Activated CD4-positive, alpha-beta memory T cell treated with anti-CD3 and anti-CD28 coated beads, Interleukin-2, amount 10 ng/mL, durations not matched to agents 7 days and 5 days (primary cell): ENCODE measurements at regions of chr7 and their contacts with region 1.

Region 1: DNA sequence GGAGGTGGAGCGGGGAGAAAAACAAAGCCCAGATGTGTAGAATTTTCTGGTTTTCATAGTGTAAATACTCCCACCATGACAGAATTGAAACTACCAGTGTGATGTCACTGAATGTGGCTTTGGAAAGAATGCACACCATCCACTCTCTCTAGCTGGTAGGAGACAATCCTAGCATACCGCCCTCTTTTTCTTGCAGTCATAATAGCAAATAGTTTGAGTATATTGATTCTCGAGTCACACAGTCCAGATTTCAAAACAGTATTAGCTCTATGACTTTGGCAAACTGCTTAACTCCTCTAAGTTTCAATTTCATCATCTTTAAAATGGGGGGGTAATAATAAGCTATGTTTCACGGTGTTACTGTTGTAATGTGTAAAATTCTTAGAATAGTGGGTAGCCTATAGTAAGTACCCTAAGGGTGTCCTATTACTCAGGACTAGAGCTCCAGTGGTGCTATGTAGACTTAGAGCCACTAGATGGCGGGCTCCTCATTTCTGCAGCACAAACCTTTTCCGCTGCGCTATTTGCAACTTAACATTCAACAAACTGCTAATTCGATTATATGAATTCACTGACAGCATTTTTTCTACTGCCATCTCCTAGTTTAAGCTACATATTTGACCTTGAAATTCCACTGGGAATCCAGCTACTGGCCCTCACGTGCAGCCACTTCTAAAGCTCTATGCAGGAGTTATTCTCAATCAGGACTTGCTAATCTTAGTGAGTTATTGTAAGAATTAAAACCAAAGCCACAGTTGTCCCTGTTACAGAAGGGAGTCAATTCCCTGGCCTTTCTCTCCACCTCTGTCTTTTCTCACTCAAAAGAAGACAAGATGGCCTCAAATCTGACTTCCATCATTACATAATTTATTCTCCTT is 18.7 kb downstream of the TAS2R40 start:
- DNase-seq: peak; percentile 77
- H3K4me3 Mint-ChIP-seq: no peak overlapping the region
- H3K27ac Mint-ChIP-seq: peak overlapping the region; percentile 33
- H3K4me1 Mint-ChIP-seq: peaks cover 52% of the 10 kb centered on the region
- H3K27me3 Mint-ChIP-seq: peaks cover 16% of the 10 kb centered on the region

Region 2: DNA sequence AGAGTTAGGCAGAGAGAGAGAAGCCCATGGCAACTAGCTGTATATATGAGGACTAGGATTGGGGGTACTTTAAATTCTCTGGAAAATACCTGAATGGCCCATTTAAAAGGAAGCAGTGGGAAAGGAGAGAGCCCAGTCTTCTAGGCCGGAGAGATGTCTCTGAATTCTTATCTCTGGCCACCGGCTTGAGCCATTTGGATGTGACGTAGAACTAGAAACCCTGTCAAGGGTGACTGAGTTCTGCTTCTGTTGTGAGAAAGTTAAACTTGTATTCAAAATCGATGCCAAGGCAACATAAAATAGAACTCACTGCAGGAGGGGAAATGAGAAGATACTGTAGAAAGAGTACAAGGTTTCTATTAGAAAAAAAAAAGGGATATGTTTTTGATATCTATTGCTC is 16.4 kb after region 1 on chr7:
- CTCF ChIA-PET with region 1: interaction called, 178 read pairs
- POLR2A ChIA-PET with region 1: interaction called, 51 read pairs
- DNase-seq: no peak
- H3K4me3 Mint-ChIP-seq: no peak overlapping the region
- H3K27ac Mint-ChIP-seq: peak overlapping the region; percentile 58
- H3K4me1 Mint-ChIP-seq: peaks cover 74% of the 10 kb centered on the region
- H3K27me3 Mint-ChIP-seq: no peaks in the 10 kb centered on the region

Region 3: GRCh38 chr7:143279186-143280098 is 38.9 kb after region 1 on chr7:
- CTCF ChIA-PET with region 1: interaction called, 30 read pairs
- POLR2A ChIA-PET with region 1: interaction called, 7 read pairs
- DNase-seq: no peak
- H3K4me3 Mint-ChIP-seq: peak overlapping the region; percentile 65
- H3K27ac Mint-ChIP-seq: peak overlapping the region; percentile 70
- H3K4me1 Mint-ChIP-seq: peaks cover 41% of the 10 kb centered on the region
- H3K27me3 Mint-ChIP-seq: no peaks in the 10 kb centered on the region

Region 4: DNA sequence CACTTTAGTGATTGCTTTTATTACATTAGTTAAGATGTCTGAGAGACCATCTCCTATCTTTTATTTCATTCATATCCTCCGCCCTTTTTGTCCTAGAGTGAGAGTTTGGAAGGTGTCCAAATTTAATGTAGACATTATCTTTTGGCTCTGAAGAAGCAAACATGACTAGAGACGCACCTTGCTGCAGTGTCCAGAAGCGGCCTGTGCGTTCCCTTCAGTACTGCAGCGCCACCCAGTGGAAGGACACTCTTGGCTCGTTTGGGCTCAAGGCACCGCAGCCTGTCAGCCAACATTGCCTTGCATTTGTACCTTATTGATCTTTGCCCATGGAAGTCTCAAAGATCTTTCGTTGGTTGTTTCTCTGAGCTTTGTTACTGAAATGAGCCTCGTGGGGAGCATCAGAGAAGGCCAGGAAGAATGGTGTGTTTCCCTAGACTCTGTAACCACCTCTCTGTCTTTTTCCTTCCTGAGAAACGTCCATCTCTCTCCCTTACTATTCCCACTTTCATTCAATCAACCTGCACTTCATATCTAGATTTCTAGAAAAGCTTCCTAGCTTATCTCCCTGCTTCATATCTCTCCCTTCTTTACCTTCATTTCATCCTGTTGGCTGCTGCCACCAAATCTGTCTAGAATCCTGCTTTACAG is 65.0 kb after region 1 on chr7:
- CTCF ChIA-PET with region 1: interaction called, 250 read pairs
- POLR2A ChIA-PET with region 1: interaction called, 13 read pairs
- DNase-seq: peak; percentile 76
- H3K4me3 Mint-ChIP-seq: no peak overlapping the region
- H3K27ac Mint-ChIP-seq: peak overlapping the region; percentile 61
- H3K4me1 Mint-ChIP-seq: peaks cover 75% of the 10 kb centered on the region
- H3K27me3 Mint-ChIP-seq: no peaks in the 10 kb centered on the region

Region 5: GRCh38 chr7:143372070-143372469 is 131.5 kb after region 1 on chr7:
- CTCF ChIA-PET with region 1: interaction called, 12 read pairs
- POLR2A ChIA-PET with region 1: interaction called, 4 read pairs
- DNase-seq: peak; percentile 66
- H3K4me3 Mint-ChIP-seq: no peak overlapping the region
- H3K27ac Mint-ChIP-seq: peak overlapping the region; percentile 80
- H3K4me1 Mint-ChIP-seq: peaks cover 55% of the 10 kb centered on the region
- H3K27me3 Mint-ChIP-seq: no peaks in the 10 kb centered on the region

Region 6: DNA sequence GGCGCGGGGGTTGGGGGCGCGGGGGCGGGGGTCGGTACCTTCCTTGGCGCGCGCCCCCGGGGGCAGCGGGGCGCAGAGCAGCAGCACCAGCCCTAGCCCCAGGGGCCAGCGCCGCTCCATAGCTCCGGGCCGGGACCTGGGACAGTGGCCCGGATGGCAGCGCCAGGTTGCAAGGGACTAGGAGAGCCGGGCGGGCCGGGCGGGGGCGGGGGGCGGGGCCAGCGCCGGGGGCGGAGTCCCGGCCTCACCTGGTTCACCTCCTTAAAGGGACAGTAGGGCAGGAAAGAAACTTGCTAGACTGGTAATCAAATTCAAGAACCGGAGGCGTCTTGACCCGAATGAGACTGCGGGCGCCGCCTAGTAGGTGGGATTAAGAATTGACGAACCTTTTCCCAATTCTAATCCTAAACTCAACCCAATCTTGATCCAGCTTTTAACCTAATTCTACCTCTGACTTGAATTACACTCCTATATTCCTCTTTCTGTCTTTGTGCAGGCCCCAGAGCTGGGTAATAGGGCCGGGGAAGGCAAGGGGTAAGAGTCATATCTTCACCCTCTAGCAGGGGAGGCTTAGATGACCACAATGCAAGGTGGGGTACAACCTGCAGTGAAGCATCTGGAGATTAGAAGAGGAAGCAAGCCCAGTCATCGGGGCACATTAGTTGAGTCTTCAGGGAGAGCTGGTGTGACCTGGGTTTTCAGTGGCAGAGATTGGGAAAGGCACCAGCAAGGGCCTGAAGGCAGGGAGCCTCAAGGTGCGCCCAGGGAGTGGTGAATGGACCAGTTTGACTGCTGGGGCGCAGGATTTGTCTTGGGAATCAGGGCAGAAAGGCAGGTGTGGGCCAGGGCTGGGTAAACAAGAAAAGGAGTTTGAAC is 168.4 kb after region 1 on chr7 and contains the start of gene EPHA1:
- CTCF ChIA-PET with region 1: interaction called, 19 read pairs
- POLR2A ChIA-PET with region 1: interaction called, 3 read pairs
- DNase-seq: peak; percentile 35
- H3K4me3 Mint-ChIP-seq: peak within 1 kb of the TSS; percentile 62
- H3K27ac Mint-ChIP-seq: no peak within 1 kb of the TSS
- H3K4me1 Mint-ChIP-seq: peaks cover 33% of the 10 kb centered on the region
- H3K27me3 Mint-ChIP-seq: peaks cover 12% of the 10 kb centered on the region
- total RNA-seq, gene EPHA1: 1.1 to 1.2 TPM